AG04449 (cell line): ENCODE measurements at regions of chr9 and their contacts with region 1.

Region 1: DNA sequence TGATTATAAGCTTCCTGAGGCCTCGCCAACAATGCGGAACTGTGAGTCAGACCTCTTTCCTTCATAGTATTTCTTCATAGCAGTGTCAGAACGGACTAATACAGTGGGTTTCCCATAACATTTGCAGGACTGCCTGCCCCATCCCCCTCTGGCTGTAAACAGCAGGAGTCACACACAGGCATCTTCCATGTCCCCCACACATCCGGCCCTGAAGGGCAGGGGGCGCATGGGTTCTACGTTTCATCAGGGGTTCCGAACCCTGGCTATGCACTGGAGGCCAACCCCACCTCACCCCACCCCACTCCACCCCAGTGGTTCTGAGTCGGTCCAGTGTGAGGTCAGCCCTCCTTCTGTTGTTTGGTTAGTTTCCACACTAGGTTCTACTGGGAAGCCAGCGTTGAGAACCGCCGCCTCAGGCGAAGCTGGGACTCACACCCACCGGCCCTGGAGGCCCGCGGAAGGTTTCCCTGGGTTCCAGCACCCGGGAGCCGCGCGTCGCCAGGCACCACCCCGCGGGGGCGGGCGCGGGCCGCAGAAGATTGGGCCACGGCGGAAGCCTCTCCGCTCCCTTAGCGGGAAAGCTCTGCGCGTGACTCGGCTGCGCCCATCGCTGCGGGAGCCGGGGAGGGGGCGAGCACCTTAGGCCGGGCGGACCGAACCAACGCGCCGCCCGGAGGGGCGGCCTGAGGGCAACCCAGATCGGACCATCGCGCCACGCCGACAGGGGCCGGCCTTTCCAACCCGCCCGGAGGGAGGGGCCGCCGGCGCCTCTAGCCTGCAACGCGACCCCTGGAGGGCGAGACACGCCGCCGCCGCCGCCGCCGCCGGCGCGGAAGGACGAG is at the start of gene RUSC2:
- DNase-seq: peak; percentile 65
- H3K4me3 ChIP-seq: peak within 1 kb of the TSS; percentile 93
- CTCF ChIP-seq: peak; percentile 52

Region 2: DNA sequence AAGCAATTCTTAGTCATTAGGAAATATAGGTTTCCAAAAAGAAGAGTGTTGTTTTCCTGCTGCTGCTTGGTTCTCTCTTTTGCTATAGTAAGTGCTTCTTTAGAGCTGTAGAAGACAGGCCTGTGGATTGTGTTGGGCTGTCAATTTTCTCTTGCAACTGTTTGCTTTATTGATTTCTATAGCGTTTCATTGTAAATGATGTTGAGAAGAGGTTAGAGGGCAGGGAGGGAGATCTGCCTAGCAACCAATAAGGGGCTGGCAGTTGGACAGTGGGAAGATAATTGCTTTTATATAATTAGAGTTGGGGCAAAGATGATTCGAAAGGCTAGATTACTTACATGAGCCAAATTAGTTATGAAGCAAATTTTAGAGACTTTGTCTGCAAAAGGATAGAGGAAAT is 316.7 kb before region 1 on chr9:
- CTCF ChIA-PET with region 1: no interaction called
- POLR2A ChIA-PET with region 1: no interaction called
- DNase-seq: no peak
- H3K4me3 ChIP-seq: no peak overlapping the region
- CTCF ChIP-seq: no peak

Region 3: GRCh38 chr9:35510745-35511428 is 21.4 kb after region 1 on chr9:
- CTCF ChIA-PET with region 1: interaction called, 5 read pairs
- POLR2A ChIA-PET with region 1: interaction called, 12 read pairs
- DNase-seq: peak; percentile 98
- H3K4me3 ChIP-seq: no peak overlapping the region
- CTCF ChIP-seq: peak; percentile 42

Region 4: GRCh38 chr9:35518226-35518821 is 28.8 kb after region 1 on chr9:
- CTCF ChIA-PET with region 1: interaction called, 3 read pairs
- POLR2A ChIA-PET with region 1: interaction called, 14 read pairs
- DNase-seq: peak; percentile 81
- H3K4me3 ChIP-seq: no peak overlapping the region
- CTCF ChIP-seq: no peak

Region 5: GRCh38 chr9:35538361-35539234 is 49.1 kb after region 1 on chr9:
- CTCF ChIA-PET with region 1: interaction called, 7 read pairs
- POLR2A ChIA-PET with region 1: interaction called, 11 read pairs
- DNase-seq: no peak
- H3K4me3 ChIP-seq: peak overlapping the region; percentile 67
- CTCF ChIP-seq: no peak